ENCODE measurements at regions of chr7 and their contacts with region 1.

Region 1: DNA sequence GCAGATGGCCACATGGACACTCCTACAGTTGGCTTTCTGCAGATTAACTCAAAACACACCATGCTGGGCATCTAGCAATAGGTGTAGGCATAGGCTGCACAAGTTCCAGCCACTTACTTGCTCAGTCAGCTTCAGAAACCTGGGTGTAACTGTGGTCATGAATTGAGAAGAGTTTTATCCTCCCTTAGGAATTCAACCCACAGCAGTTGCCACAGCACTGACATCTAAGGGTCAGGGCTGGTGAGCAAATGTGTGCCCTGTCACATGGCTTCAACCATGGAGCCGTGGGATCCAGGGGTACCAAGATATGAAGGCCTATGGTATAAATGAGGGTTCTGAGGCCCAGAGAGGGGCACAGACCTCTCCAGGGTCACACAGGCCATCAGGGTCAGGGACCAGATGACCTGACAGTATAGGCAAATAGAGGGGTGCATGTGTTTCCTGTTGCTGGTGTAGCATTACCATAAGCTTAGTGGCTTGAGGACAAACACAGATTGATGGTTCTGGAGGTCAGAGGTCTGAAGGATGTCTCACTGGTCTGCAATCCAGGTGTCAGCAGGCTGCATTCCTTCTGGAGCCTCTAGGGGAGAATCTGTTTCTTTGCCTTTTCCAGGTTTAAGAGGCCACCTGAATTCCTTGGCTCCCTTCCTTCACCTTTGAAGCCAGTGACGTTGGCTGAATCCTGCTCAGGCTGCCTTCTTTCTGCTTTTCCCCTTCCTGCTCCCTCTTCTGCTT is 24.1 kb downstream of the MINDY4 start:
- DNase-seq: peak; percentile 79 to 86
- H3K4me3 ChIP-seq: no peak overlapping the region
- H3K4me3 Mint-ChIP-seq: no peak overlapping the region
- H3K27ac Mint-ChIP-seq: peak overlapping the region; percentile 74
- H3K4me1 ChIP-seq: peaks cover 38% of the 10 kb centered on the region
- H3K4me1 Mint-ChIP-seq: peaks cover 31% of the 10 kb centered on the region
- H3K27me3 ChIP-seq: no peaks in the 10 kb centered on the region
- H3K27me3 Mint-ChIP-seq: no peaks in the 10 kb centered on the region
- CTCF ChIP-seq: peak in 1 of 2 experiments; percentile 29

Region 2: DNA sequence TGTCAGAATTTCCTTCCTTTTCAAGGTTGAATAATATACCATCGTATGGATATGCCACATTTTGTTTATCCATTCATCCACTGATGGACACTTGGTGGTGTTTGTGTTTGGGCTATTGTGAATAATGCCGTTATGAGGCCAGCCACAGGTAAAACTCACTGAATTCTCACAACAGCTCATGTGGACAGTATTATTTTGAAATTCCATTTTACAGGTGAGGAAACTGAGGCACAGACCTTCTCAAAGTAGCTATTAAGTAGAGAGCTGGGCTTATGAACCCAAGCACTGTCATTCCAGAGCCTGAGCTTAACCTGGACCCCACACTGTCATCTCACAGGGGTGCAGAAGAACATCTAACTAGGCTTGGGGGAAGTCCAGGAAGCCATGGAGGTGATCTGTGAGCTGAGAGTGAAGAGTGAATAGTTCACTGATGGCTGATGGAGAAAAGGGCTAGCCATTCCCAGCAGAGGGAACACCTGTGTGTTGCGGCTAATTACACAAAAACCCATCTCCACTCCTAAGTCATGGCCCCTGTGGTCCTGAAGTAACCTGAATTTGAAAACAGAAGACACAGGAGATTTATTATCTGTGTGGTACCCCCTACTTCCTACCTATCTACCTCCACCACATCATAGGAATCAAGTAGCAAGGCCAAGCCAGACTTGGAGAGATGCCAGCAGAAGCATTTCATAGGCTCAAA is 34.7 kb before region 1 on chr7:
- CTCF ChIA-PET with region 1: no interaction called
- POLR2A ChIA-PET with region 1: no interaction called
- intact Hi-C with region 1: no loop called
- DNase-seq: no peak
- H3K4me3 ChIP-seq: no peak overlapping the region
- H3K4me3 Mint-ChIP-seq: no peak overlapping the region
- H3K27ac Mint-ChIP-seq: no peak overlapping the region
- H3K4me1 ChIP-seq: peaks cover 16% of the 10 kb centered on the region
- H3K4me1 Mint-ChIP-seq: peaks cover 11% of the 10 kb centered on the region
- H3K27me3 ChIP-seq: no peaks in the 10 kb centered on the region
- H3K27me3 Mint-ChIP-seq: no peaks in the 10 kb centered on the region
- CTCF ChIP-seq: no peak

Region 3: GRCh38 chr7:30771174-30771879 is 24.0 kb before region 1 on chr7 and contains the start of gene MINDY4:
- CTCF ChIA-PET with region 1: interaction called, 6 read pairs
- POLR2A ChIA-PET with region 1: no interaction called
- intact Hi-C with region 1: loop called (anchors 2 kb)
- DNase-seq: peak; percentile 73 to 77
- H3K4me3 ChIP-seq: peak within 1 kb of the TSS; percentile 67
- H3K4me3 Mint-ChIP-seq: peak within 1 kb of the TSS; percentile 78
- H3K27ac Mint-ChIP-seq: peak within 1 kb of the TSS; percentile 49
- H3K4me1 ChIP-seq: peaks cover 6% of the 10 kb centered on the region
- H3K4me1 Mint-ChIP-seq: peaks cover 6% of the 10 kb centered on the region
- H3K27me3 ChIP-seq: no peaks in the 10 kb centered on the region
- H3K27me3 Mint-ChIP-seq: no peaks in the 10 kb centered on the region
- CTCF ChIP-seq: no peak
- total RNA-seq, gene MINDY4: 2.0 and 2.1 TPM in 2 replicates